Lower leg skin (tissue), 4 donors: ENCODE measurements at regions of chr19 and their contacts with region 1.

Region 1: DNA sequence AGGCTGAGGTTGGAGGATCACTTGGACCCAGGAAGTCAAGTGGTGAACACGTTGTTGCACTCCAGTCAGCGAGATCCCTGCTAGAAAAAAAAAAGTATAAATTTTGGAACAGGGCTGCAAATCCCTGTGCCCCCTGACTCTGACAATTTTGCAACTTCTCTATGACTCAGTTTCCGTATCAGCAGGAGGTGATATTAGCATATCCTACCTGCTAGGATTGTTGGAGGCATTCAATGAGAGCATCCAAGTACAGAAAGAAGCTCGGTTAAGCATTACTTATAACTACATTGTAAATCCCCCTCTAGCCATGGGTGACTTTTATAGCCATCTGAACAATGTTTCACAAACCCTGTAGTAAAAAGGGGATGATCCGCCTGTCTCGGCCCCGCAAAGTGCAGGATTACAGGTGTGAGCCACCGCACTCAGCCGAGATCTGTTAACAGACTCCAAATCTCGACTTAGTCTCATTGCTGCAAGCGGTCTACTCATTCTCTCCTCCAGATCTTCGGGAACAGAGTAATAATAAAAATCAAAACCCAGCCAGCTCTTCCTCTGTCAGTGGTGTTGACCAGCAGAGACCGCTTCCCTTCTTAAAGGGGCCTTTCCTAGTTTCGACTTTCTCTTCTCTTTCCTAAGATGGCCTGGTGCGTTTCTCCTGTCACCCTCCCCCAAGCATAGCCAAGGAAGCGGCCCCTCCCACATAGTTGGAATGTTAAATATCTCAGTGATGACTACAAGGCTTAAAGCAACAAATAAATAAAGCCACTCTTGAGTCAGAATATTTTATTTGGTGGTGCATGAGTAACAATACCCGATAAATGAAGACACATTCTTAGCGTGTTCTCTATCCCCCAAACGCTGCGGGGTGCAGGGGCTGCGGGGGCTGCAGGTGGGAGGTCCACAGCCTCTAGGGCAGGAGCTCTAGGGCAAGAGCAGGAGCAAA is 10.3 kb upstream of the BICRA start:
- DNase-seq: peak; percentile 66 to 89
- H3K4me3 ChIP-seq: no peak overlapping the region
- CTCF ChIP-seq: no peak
- POLR2A ChIP-seq: no peak

Region 2: DNA sequence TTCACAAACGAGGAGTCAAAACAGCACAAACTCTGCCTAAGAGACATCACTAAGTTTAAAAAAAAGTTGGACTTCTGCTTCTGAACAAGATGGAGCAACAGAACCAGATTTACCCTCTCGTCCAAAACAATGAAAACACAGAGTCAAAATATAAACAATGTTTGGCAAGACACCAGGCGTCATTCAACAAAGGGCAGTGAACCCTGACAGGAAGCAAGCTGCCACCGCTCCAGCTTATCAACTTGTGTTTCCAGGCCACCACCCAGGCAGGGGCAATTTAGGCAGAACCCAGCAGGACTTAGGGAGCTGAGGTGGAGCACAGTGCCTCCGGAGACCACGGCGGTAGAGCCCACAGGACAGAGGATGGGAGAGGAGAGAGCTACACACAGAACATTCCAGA is 75.2 kb before region 1 on chr19:
- intact Hi-C with region 1: loop called (anchors 10 kb)
- DNase-seq: no peak
- H3K4me3 ChIP-seq: no peak overlapping the region
- CTCF ChIP-seq: no peak
- POLR2A ChIP-seq: no peak